GM12878 (cell line): ENCODE measurements at regions of chr9 and their contacts with region 1.

Region 1: GRCh38 chr9:38227061-38227540 is 158.1 kb upstream of the SHB start:
- DNase-seq: peak; percentile 23
- ATAC-seq: peak; percentile 83
- H3K4me3 ChIP-seq: peak overlapping the region; percentile 32; the same call in 1 of the 2 replicates
- H3K27ac ChIP-seq: no peak overlapping the region
- H3K4me1 ChIP-seq: peaks cover 7% of the 10 kb centered on the region
- H3K27me3 ChIP-seq: peaks cover 0 to 5% of the 10 kb centered on the region in 2 experiments
- CTCF ChIP-seq: no peak
- EP300 ChIP-seq: no peak
- POLR2A ChIP-seq: no peak
- RAD21 ChIP-seq: no peak

Region 2: GRCh38 chr9:38133595-38133994 is 93.5 kb before region 1 on chr9:
- CTCF ChIA-PET with region 1: no interaction called
- POLR2A ChIA-PET with region 1: no interaction called
- RAD21 ChIA-PET with region 1: interaction called, 11 read pairs
- SMC1A ChIA-PET with region 1: interaction called, 7 read pairs
- in situ Hi-C with region 1: no loop called
- intact Hi-C with region 1: no loop called
- DNase-seq: no peak
- ATAC-seq: no peak
- H3K4me3 ChIP-seq: no peak overlapping the region
- H3K27ac ChIP-seq: no peak overlapping the region
- H3K4me1 ChIP-seq: peaks cover 3% of the 10 kb centered on the region; the same call in 1 of the 2 replicates
- H3K27me3 ChIP-seq: peaks cover 0 to 2% of the 10 kb centered on the region in 2 experiments; a peak in 3 of 4 replicates
- CTCF ChIP-seq: no peak
- EP300 ChIP-seq: no peak
- POLR2A ChIP-seq: no peak
- RAD21 ChIP-seq: peak; percentile 29; the same call in 1 of the 2 replicates

Region 3: DNA sequence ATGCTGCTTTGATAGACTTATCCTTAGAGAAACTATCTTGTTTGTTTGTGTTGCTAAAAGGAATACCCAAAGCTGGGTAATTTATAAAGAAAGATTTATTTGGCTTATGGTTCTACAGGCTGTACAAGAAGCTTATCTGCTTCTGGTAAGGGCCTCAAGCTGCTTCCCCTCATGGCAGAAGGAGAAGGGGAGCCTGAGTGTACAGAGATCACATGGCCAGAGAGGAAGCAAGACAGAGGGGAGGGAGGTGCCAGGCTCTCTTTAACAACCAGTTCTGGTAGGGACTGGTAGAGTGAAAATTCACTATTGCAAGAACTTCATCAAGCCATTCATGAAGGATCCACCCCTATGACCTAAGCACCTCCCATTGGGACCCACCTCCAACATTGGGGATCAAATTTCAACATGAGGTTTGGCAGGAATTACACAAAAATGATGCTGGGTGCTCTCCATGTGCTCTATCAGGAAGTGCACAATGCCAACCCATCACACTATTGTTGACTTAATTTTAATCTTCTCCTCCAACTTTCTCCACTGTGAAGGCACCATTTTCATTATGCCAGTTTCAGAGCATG is 43.0 kb before region 1 on chr9:
- CTCF ChIA-PET with region 1: interaction called, 8 read pairs
- POLR2A ChIA-PET with region 1: interaction called, 7 read pairs
- RAD21 ChIA-PET with region 1: interaction called, 97 read pairs
- SMC1A ChIA-PET with region 1: interaction called, 88 read pairs
- in situ Hi-C with region 1: no loop called
- intact Hi-C with region 1: no loop called
- DNase-seq: no peak
- ATAC-seq: no peak
- H3K4me3 ChIP-seq: no peak overlapping the region
- H3K27ac ChIP-seq: no peak overlapping the region
- H3K4me1 ChIP-seq: peaks cover 14% of the 10 kb centered on the region
- H3K27me3 ChIP-seq: peaks cover 0 to 2% of the 10 kb centered on the region in 2 experiments; a peak in 1 of 4 replicates
- CTCF ChIP-seq: no peak
- EP300 ChIP-seq: no peak
- POLR2A ChIP-seq: no peak
- RAD21 ChIP-seq: no peak

Region 4: GRCh38 chr9:38195737-38196161 is 31.4 kb before region 1 on chr9:
- CTCF ChIA-PET with region 1: no interaction called
- POLR2A ChIA-PET with region 1: interaction called, 5 read pairs
- RAD21 ChIA-PET with region 1: interaction called, 13 read pairs
- SMC1A ChIA-PET with region 1: interaction called, 6 read pairs
- in situ Hi-C with region 1: no loop called
- intact Hi-C with region 1: no loop called
- DNase-seq: no peak
- ATAC-seq: no peak
- H3K4me3 ChIP-seq: no peak overlapping the region
- H3K27ac ChIP-seq: no peak overlapping the region
- H3K4me1 ChIP-seq: no peaks in the 10 kb centered on the region; the same call in 1 of the 2 replicates
- H3K27me3 ChIP-seq: no peaks in the 10 kb centered on the region; a peak in 1 of 4 replicates
- CTCF ChIP-seq: no peak
- EP300 ChIP-seq: no peak
- POLR2A ChIP-seq: no peak
- RAD21 ChIP-seq: no peak

Region 5: DNA sequence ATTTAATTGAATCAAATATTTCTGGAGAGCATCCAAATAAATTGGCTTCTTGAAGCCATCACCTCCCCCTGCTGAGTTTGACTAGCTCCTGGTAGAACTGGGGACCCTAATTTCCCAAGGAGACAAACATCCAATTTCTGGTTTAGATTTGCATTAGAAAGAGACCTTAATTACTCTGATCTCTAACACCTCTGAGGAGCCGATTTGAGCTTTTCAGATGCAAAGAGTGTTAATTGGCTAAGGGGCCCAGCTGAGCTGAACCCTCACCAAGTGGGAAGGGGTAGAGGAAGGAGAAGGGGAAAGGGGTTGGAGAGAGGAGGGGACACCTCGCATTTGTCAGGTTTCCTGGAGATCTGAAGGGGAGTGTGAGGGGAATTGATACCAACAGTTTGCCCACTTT is 12.7 kb before region 1 on chr9:
- CTCF ChIA-PET with region 1: interaction called, 3 read pairs
- POLR2A ChIA-PET with region 1: no interaction called
- RAD21 ChIA-PET with region 1: interaction called, 12 read pairs
- SMC1A ChIA-PET with region 1: interaction called, 7 read pairs
- in situ Hi-C with region 1: no loop called
- intact Hi-C with region 1: no loop called
- DNase-seq: no peak
- ATAC-seq: no peak
- H3K4me3 ChIP-seq: no peak overlapping the region
- H3K27ac ChIP-seq: no peak overlapping the region
- H3K4me1 ChIP-seq: no peaks in the 10 kb centered on the region
- H3K27me3 ChIP-seq: no peaks in the 10 kb centered on the region
- CTCF ChIP-seq: no peak
- EP300 ChIP-seq: no peak
- POLR2A ChIP-seq: no peak
- RAD21 ChIP-seq: no peak

Region 6: GRCh38 chr9:38243993-38244392 is 16.9 kb after region 1 on chr9:
- CTCF ChIA-PET with region 1: interaction called, 4 read pairs
- POLR2A ChIA-PET with region 1: interaction called, 10 read pairs
- RAD21 ChIA-PET with region 1: interaction called, 3 read pairs
- SMC1A ChIA-PET with region 1: interaction called, 16 read pairs
- in situ Hi-C with region 1: no loop called
- intact Hi-C with region 1: no loop called
- DNase-seq: no peak
- ATAC-seq: no peak
- H3K4me3 ChIP-seq: no peak overlapping the region
- H3K27ac ChIP-seq: no peak overlapping the region
- H3K4me1 ChIP-seq: no peaks in the 10 kb centered on the region
- H3K27me3 ChIP-seq: no peaks in the 10 kb centered on the region
- CTCF ChIP-seq: no peak
- EP300 ChIP-seq: no peak
- POLR2A ChIP-seq: no peak
- RAD21 ChIP-seq: no peak